Uterus (tissue), 4 donors: ENCODE measurements at regions of chr3 and their contacts with region 1.

Region 1: GRCh38 chr3:9149549-9149948 is 99.9 kb downstream of the SRGAP3 start:
- DNase-seq: no peak
- H3K4me3 ChIP-seq: no peak overlapping the region
- H3K27ac ChIP-seq: peak overlapping the region in 1 of 2 donors; percentile 82
- H3K4me1 ChIP-seq: peaks cover 4% of the 10 kb centered on the region in 2 donors
- H3K27me3 ChIP-seq: no peaks in the 10 kb centered on the region
- CTCF ChIP-seq: no peak
- POLR2A ChIP-seq: no peak

Region 2: GRCh38 chr3:9201266-9201665 is 51.7 kb after region 1 on chr3:
- intact Hi-C with region 1: no loop called
- DNase-seq: no peak
- H3K4me3 ChIP-seq: no peak overlapping the region
- H3K27ac ChIP-seq: no peak overlapping the region
- H3K4me1 ChIP-seq: no peaks in the 10 kb centered on the region
- H3K27me3 ChIP-seq: no peaks in the 10 kb centered on the region
- CTCF ChIP-seq: no peak
- POLR2A ChIP-seq: no peak

Region 3: GRCh38 chr3:9216736-9217135 is 67.2 kb after region 1 on chr3:
- intact Hi-C with region 1: loop called (anchors 2 kb)
- DNase-seq: peak; percentile 57 to 72
- H3K4me3 ChIP-seq: no peak overlapping the region
- H3K27ac ChIP-seq: peak overlapping the region; percentile 52 to 73
- H3K4me1 ChIP-seq: no peaks in the 10 kb centered on the region
- H3K27me3 ChIP-seq: no peaks in the 10 kb centered on the region
- CTCF ChIP-seq: no peak
- POLR2A ChIP-seq: no peak

Region 4: GRCh38 chr3:9349321-9350117 is 200.0 kb after region 1 on chr3:
- intact Hi-C with region 1: no loop called
- DNase-seq: no peak
- H3K4me3 ChIP-seq: no peak overlapping the region
- H3K27ac ChIP-seq: no peak overlapping the region
- H3K4me1 ChIP-seq: no peaks in the 10 kb centered on the region
- H3K27me3 ChIP-seq: no peaks in the 10 kb centered on the region
- CTCF ChIP-seq: no peak
- POLR2A ChIP-seq: no peak